ENCODE measurements at regions of chr5 and their contacts with region 1.

Region 1: GRCh38 chr5:39217365-39218281 is 1.7 kb downstream of the FYB1 start:
- DNase-seq: peak; percentile 85
- H3K4me3 Mint-ChIP-seq: peak overlapping the region; percentile 68
- H3K27ac Mint-ChIP-seq: peak overlapping the region; percentile 85
- H3K4me1 Mint-ChIP-seq: peaks cover 65% of the 10 kb centered on the region
- H3K27me3 Mint-ChIP-seq: no peaks in the 10 kb centered on the region

Region 2: GRCh38 chr5:39148983-39149534 is 68.6 kb before region 1 on chr5:
- CTCF ChIA-PET with region 1: interaction called, 52 read pairs
- DNase-seq: no peak
- H3K4me3 Mint-ChIP-seq: no peak overlapping the region
- H3K27ac Mint-ChIP-seq: peak overlapping the region; percentile 26
- H3K4me1 Mint-ChIP-seq: peaks cover 53% of the 10 kb centered on the region
- H3K27me3 Mint-ChIP-seq: no peaks in the 10 kb centered on the region

Region 3: GRCh38 chr5:39177631-39177964 is 40.0 kb before region 1 on chr5:
- CTCF ChIA-PET with region 1: interaction called, 45 read pairs
- DNase-seq: no peak
- H3K4me3 Mint-ChIP-seq: peak overlapping the region; percentile 69
- H3K27ac Mint-ChIP-seq: peak overlapping the region; percentile 95
- H3K4me1 Mint-ChIP-seq: peaks cover 97% of the 10 kb centered on the region
- H3K27me3 Mint-ChIP-seq: no peaks in the 10 kb centered on the region

Region 4: DNA sequence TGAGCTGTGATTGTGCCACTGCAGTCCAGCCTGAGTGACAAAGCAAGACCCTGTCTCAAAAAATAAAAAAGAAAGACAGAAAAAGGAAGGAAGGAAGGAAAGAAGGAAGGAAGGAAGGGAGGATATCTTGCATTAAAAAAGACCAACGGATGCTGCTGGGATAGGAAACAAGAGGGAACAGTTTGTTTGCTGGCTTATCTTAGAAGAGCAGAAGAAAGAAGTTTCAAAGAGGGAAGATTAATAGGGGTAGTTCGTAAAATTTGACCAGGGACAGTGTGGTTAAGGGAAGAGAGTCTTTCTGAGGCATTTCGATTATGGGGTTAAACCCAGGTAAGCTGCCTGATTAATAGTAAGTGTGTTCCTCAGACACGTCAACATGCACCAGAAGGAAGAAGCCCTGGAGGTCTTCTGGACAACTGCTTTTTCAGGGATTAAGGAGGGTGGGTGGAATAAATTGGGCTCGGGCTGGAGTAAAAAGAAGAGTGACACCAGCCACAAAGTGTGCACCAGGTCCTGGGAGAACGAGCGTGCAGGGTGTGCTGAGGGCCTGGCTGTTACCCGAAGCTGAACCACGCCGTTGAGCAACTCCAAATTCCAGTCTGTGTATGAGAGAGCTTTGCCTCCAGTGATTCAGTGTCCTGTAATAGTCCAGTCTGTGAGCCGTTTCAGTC is 23.0 kb before region 1 on chr5:
- CTCF ChIA-PET with region 1: interaction called, 57 read pairs
- DNase-seq: peak; percentile 35
- H3K4me3 Mint-ChIP-seq: peak overlapping the region; percentile 72
- H3K27ac Mint-ChIP-seq: peak overlapping the region; percentile 86
- H3K4me1 Mint-ChIP-seq: peaks cover 76% of the 10 kb centered on the region
- H3K27me3 Mint-ChIP-seq: no peaks in the 10 kb centered on the region

Region 5: GRCh38 chr5:39231705-39232525 is 14.3 kb after region 1 on chr5:
- CTCF ChIA-PET with region 1: interaction called, 18 read pairs
- DNase-seq: no peak
- H3K4me3 Mint-ChIP-seq: no peak overlapping the region
- H3K27ac Mint-ChIP-seq: peak overlapping the region; percentile 37
- H3K4me1 Mint-ChIP-seq: peaks cover 14% of the 10 kb centered on the region
- H3K27me3 Mint-ChIP-seq: no peaks in the 10 kb centered on the region

Region 6: GRCh38 chr5:39274398-39275085 is 56.9 kb after region 1 on chr5:
- CTCF ChIA-PET with region 1: interaction called, 26 read pairs
- DNase-seq: no peak
- H3K4me3 Mint-ChIP-seq: peak overlapping the region; percentile 64
- H3K27ac Mint-ChIP-seq: peak overlapping the region; percentile 96
- H3K4me1 Mint-ChIP-seq: peaks cover 55% of the 10 kb centered on the region
- H3K27me3 Mint-ChIP-seq: no peaks in the 10 kb centered on the region

Region 7: GRCh38 chr5:39376293-39376714 is 158.7 kb after region 1 on chr5:
- CTCF ChIA-PET with region 1: interaction called, 10 read pairs
- DNase-seq: peak; percentile 49
- H3K4me3 Mint-ChIP-seq: no peak overlapping the region
- H3K27ac Mint-ChIP-seq: no peak overlapping the region
- H3K4me1 Mint-ChIP-seq: no peaks in the 10 kb centered on the region
- H3K27me3 Mint-ChIP-seq: peaks cover 14% of the 10 kb centered on the region